Activated CD4-positive, alpha-beta T cell treated with anti-CD3 and anti-CD28 coated beads for 36 hours (primary cell): ENCODE measurements at regions of chr2 and their contacts with region 1.

Region 1: DNA sequence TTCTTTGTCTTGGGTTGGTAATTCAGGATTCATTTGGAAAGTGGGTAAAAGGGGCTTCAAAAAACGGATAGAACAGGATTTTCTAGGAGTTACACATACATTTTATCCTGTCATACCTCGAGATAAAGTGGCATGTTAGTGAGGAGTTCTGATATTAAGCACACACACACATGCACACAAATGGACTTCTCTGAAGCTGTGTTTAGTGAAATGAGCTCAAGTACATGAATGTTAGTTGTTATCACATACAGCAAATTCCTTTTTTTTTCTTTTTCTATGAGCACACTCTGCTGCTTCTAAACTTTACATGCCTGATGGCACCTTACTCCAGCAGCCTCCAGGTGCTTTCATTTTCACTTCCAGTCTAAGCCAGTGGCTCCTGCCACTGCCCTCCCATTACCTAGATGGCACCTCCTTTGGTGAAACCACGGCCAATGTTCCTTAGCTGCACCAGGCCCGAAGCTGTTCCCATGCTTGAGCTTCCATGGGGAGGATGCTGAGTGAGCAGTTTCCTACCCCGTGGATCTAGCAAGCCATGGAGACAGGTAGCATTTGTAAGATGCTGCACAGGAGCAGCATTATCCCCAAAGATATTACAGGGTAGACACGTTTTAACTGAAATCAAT is 49.7 kb downstream of the STAT1 start:
- DNase-seq: no peak
- ATAC-seq: peak; percentile 32
- H3K4me3 Mint-ChIP-seq: no peak overlapping the region
- H3K27ac Mint-ChIP-seq: peak overlapping the region; percentile 62
- H3K4me1 Mint-ChIP-seq: peaks cover 17% of the 10 kb centered on the region
- H3K27me3 Mint-ChIP-seq: no peaks in the 10 kb centered on the region

Region 2: GRCh38 chr2:190979906-190980629 is 15.8 kb after region 1 on chr2:
- CTCF ChIA-PET with region 1: interaction called, 4 read pairs
- POLR2A ChIA-PET with region 1: no interaction called
- intact Hi-C with region 1: loop called in 1 of 2 experiments (anchors 2 kb)
- DNase-seq: no peak
- ATAC-seq: no peak
- H3K4me3 Mint-ChIP-seq: no peak overlapping the region
- H3K27ac Mint-ChIP-seq: peak overlapping the region; percentile 78
- H3K4me1 Mint-ChIP-seq: peaks cover 69% of the 10 kb centered on the region
- H3K27me3 Mint-ChIP-seq: no peaks in the 10 kb centered on the region